Motor neuron (in vitro differentiated cells): ENCODE measurements at regions of chr1 and their contacts with region 1.

Region 1: DNA sequence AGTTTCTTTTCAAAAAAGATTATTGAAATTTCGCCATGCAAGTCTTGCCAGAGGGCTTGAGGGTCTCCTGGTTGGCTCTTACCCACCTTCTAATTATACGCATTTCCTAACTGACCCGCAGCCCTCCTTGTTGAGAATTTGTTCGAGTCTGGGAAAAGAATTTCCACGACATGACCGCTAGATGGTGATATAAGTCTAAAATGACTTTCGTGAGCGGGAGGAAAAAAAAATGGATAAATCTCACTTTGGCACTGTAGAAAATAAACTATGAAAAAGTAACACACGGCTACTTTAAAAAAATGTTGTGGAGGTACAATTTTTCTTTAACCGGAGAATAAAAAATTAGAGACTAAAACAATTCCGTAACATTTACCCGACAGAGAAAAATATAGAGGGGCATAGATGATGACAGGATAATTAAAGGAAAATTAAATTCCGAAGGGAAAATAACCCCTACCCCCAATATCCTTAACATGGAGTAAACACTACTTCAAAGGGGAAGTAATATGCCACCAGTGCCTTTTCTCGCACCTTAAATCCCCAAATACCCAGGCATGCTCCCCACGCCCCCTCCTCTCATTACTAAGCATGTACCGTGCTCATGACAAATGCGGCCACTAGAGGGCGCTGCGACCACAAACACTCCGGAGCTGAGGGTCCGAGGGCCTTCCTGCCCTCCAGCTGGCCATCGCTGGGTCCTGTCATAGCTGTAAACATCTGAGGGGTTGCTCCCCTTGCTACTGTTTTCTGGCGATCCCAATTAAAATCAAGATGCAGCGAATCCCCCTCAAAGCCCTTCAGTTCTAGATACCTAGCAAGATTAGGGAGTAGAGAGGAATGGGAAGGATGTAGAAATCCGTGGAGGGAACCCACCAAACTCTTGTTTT is 266.9 kb downstream of the ASTN1 start:
- ATAC-seq: peak; percentile 72 to 100 (median 100)
- H3K4me3 ChIP-seq: peak overlapping the region in 3 of 5 donors; percentile 5 to 14 (median 14)
- H3K27ac ChIP-seq: no peak overlapping the region
- H3K4me1 ChIP-seq: peaks cover 3 to 6% of the 10 kb centered on the region in 2 donors

Region 2: DNA sequence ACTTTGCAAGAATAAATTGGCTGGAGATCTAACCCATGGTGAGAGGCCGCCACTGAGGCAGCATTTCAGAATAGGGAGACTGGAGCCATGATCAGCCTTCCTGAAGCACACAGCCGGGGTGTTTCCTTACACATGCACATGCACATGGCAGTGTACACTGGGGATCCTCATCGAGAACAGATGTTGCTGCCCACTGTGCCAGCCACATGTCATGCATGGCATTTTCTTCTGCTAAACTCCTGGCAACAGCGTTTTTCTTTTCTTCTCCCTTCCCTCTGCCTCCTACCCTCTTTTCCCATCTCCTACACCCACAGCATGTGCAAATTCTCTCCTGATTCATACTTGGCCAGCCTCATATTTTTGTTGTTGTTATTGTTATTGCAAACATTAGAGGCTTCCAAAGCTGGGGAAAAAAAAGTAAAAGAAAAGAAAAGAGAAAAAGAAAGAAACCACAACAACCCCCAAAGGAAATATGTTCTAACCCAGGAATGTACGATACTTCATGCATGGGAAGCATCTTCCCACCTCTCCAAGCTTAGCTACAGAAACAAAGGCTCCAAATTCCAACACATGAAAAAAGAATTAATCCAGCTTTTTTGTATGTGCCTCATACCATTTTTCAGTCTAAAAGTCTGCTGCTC is 77.1 kb before region 1 on chr1:
- in situ Hi-C with region 1: no loop called
- ATAC-seq: peak in 3 of 8 experiments; percentile 31 to 64 (median 59)
- H3K4me3 ChIP-seq: no peak overlapping the region
- H3K27ac ChIP-seq: no peak overlapping the region
- H3K4me1 ChIP-seq: no peaks in the 10 kb centered on the region

Region 3: GRCh38 chr1:177780096-177780700 is 882.6 kb after region 1 on chr1:
- in situ Hi-C with region 1: loop called in 3 of 9 experiments (anchors 10 to 25 kb)
- ATAC-seq: peak in 7 of 8 experiments; percentile 43 to 83 (median 69)
- H3K4me3 ChIP-seq: no peak overlapping the region
- H3K27ac ChIP-seq: no peak overlapping the region
- H3K4me1 ChIP-seq: peaks cover 36 to 47% of the 10 kb centered on the region in 2 donors